Lower leg skin (tissue), 4 donors: ENCODE measurements at regions of chr2 and their contacts with region 1.

Region 1: GRCh38 chr2:53802617-53803151 is 15.8 kb downstream of the ERLEC1 start:
- DNase-seq: no peak
- H3K4me3 ChIP-seq: no peak overlapping the region
- CTCF ChIP-seq: no peak
- POLR2A ChIP-seq: no peak

Region 2: DNA sequence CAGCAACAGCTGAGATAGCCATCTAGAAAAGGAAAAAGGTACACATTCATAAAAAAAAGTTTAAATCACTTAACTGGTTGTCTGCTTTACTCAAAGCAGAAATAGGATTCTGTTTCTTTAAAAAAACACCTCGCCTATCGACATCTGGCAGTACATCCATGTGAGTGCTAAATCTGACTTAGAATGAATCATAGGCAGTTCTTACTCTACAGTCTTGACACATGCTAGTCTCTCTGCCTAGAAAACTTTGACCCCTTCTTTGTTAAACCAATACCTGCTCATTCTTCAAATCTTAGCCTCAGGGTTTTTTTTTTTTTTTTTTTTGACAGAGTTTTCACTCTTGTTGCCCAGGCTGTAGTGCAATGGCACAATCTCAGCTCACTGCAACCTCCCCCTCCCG is 94.2 kb after region 1 on chr2:
- intact Hi-C with region 1: loop called (anchors 10 kb)
- DNase-seq: no peak
- H3K4me3 ChIP-seq: no peak overlapping the region
- CTCF ChIP-seq: no peak
- POLR2A ChIP-seq: no peak